ENCODE measurements at regions of chr20 and their contacts with region 1.

Region 1: DNA sequence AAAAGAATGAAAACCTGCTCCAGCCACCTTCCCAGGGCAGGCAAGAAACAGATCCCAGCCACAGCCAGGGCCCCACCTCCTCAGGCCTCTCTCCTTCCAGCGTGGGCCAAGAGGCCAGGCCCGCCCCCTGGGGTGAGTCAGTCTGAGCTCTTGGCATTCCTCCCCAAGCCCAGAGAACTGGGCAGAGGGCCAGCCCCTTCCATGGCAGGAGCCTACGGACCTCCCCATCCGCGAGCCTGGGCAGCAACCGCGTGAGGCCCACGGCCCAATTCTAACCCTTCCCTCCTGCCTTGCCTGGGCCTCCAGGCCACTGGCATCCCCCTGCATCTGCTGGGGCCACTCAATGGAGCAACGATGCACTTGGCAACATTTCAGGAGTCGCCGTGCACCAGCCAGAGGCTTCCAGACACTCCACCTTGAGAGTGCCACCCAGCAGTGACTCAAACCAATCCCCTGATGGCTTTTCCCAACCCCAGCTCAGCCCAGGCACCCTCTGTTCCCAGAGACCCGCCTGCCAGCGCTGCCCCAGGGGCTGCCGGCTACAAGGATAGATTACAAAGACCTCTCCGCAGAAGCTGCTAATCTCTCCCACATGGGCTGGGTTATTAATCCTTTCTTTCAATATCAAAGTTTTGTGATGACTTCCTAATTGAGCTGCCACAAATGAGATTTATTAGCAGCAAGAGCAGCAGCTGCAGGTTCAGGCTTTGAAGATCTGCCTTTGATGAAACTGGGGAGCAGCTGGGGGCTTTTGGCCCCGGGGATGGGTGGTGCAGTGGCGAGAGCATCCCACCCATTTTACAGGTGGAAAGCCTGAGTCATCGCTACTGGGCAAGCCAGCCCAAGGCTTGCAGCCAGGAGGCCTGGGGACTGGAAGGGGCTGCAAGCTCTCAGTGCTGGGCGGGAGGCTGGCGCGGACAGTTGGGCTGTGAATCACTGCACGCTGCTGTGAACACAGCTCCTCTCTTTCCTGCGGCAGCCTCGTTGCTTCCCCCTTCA is 85.7 kb downstream of the NFATC2 start:
- DNase-seq: peak; percentile 34
- ATAC-seq: peak; percentile 31
- H3K4me3 ChIP-seq: peak overlapping the region in 1 of 5 experiments; percentile 36
- H3K4me3 Mint-ChIP-seq: peak overlapping the region; percentile 64
- H3K27ac ChIP-seq: peak overlapping the region in 1 of 2 donors; percentile 12
- H3K27ac Mint-ChIP-seq: peak overlapping the region; percentile 56
- H3K4me1 ChIP-seq: peaks cover 43 to 51% of the 10 kb centered on the region in 2 donors
- H3K4me1 Mint-ChIP-seq: peaks cover 45% of the 10 kb centered on the region
- H3K27me3 ChIP-seq: no peaks in the 10 kb centered on the region
- H3K27me3 Mint-ChIP-seq: no peaks in the 10 kb centered on the region
- CTCF ChIP-seq: no peak

Region 2: GRCh38 chr20:51404298-51405060 is 52.3 kb before region 1 on chr20:
- CTCF ChIA-PET with region 1: interaction called, 11 read pairs
- POLR2A ChIA-PET with region 1: no interaction called
- intact Hi-C with region 1: loop called (anchors 1 kb)
- DNase-seq: peak; percentile 92
- ATAC-seq: peak; percentile 85
- H3K4me3 ChIP-seq: no peak overlapping the region
- H3K4me3 Mint-ChIP-seq: peak overlapping the region; percentile 49
- H3K27ac ChIP-seq: peak overlapping the region; percentile 86 to 97
- H3K27ac Mint-ChIP-seq: peak overlapping the region; percentile 99
- H3K4me1 ChIP-seq: peaks cover 62 to 74% of the 10 kb centered on the region in 2 donors
- H3K4me1 Mint-ChIP-seq: peaks cover 77% of the 10 kb centered on the region
- H3K27me3 ChIP-seq: no peaks in the 10 kb centered on the region
- H3K27me3 Mint-ChIP-seq: no peaks in the 10 kb centered on the region
- CTCF ChIP-seq: no peak

Region 3: GRCh38 chr20:51412333-51412871 is 44.4 kb before region 1 on chr20:
- CTCF ChIA-PET with region 1: no interaction called
- POLR2A ChIA-PET with region 1: no interaction called
- intact Hi-C with region 1: loop called (anchors 1 kb)
- DNase-seq: no peak
- ATAC-seq: no peak
- H3K4me3 ChIP-seq: no peak overlapping the region
- H3K4me3 Mint-ChIP-seq: no peak overlapping the region
- H3K27ac ChIP-seq: no peak overlapping the region
- H3K27ac Mint-ChIP-seq: peak overlapping the region; percentile 59
- H3K4me1 ChIP-seq: peaks cover 46 to 61% of the 10 kb centered on the region in 2 donors
- H3K4me1 Mint-ChIP-seq: peaks cover 65% of the 10 kb centered on the region
- H3K27me3 ChIP-seq: no peaks in the 10 kb centered on the region
- H3K27me3 Mint-ChIP-seq: no peaks in the 10 kb centered on the region
- CTCF ChIP-seq: no peak

Region 4: DNA sequence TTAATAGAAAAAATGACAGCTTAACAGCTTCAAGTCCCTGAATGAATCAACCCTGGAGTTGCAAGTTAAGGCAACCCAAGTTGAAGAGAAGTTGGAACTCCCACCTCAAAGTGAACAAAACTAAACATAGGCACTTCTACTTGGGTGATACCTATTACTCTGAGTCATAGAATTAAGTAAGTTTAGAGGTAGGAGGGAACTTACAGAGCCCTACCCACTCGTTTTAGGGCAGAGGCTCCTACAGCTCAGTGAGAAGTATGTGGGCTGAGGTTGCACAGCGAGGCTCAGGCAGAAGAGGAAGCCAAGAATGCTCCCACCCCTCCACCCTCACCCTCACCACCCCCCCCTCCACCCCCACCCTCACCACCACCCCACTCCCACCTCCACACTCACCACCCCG is 43.5 kb after region 1 on chr20:
- CTCF ChIA-PET with region 1: interaction called, 3 read pairs
- POLR2A ChIA-PET with region 1: interaction called, 3 read pairs
- intact Hi-C with region 1: loop called (anchors 2 kb)
- DNase-seq: peak; percentile 63
- ATAC-seq: peak; percentile 76
- H3K4me3 ChIP-seq: no peak overlapping the region
- H3K4me3 Mint-ChIP-seq: no peak overlapping the region
- H3K27ac ChIP-seq: peak overlapping the region; percentile 11 to 25
- H3K27ac Mint-ChIP-seq: peak overlapping the region; percentile 29
- H3K4me1 ChIP-seq: peaks cover 71 to 89% of the 10 kb centered on the region in 2 donors
- H3K4me1 Mint-ChIP-seq: peaks cover 89% of the 10 kb centered on the region
- H3K27me3 ChIP-seq: no peaks in the 10 kb centered on the region
- H3K27me3 Mint-ChIP-seq: no peaks in the 10 kb centered on the region
- CTCF ChIP-seq: no peak

Region 5: DNA sequence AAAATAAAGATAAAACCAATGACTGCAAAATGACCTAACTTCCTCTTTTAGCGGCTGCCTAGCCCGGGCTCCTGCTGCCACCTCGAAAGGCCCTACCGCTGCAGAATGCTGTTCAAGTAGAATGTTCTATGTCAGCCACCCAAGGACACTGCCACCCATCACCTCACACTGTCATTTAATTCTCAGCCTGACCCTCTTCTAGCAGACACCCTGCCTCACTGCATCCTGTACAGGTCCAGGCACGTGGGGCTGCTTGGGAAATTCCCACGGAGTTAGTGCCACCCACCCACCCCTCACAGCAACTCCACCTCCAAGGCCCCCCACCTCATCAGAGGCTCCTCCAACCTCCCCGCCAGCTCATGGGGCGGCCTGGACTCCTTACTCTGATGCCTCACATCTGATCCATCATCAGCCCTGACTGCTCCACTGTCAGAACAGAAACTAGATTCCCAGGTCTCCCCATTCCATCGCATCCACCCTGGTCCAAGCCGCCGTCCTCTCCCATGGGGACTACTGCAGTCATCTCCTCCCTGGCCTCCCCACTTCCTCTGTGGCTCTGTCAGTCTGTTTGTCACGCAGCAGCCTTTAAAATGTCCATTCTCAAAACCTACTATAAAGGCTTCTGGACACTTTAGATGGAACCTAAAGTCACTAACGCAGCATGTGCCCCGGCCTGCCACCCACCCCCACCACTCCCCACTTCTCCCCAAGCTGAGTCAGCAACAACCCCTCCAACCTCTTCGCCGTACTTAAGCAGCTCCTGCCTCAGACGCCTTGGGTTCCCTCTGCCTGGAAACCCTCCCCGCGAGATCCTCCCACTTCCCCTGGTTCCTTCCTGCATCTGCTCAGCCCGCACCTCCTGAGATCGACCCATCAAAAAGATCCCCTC is 68.7 kb after region 1 on chr20:
- CTCF ChIA-PET with region 1: no interaction called
- POLR2A ChIA-PET with region 1: no interaction called
- intact Hi-C with region 1: loop called (anchors 5 kb)
- DNase-seq: peak; percentile 69
- ATAC-seq: peak; percentile 66
- H3K4me3 ChIP-seq: peak overlapping the region in 2 of 5 experiments; percentile 2 to 48
- H3K4me3 Mint-ChIP-seq: peak overlapping the region; percentile 80
- H3K27ac ChIP-seq: peak overlapping the region; percentile 70 to 78
- H3K27ac Mint-ChIP-seq: peak overlapping the region; percentile 89
- H3K4me1 ChIP-seq: peaks cover 47 to 60% of the 10 kb centered on the region in 2 donors
- H3K4me1 Mint-ChIP-seq: peaks cover 70% of the 10 kb centered on the region
- H3K27me3 ChIP-seq: no peaks in the 10 kb centered on the region
- H3K27me3 Mint-ChIP-seq: no peaks in the 10 kb centered on the region
- CTCF ChIP-seq: no peak

Region 6: GRCh38 chr20:51541189-51542032 is 84.6 kb after region 1 on chr20:
- CTCF ChIA-PET with region 1: interaction called, 9 read pairs
- POLR2A ChIA-PET with region 1: interaction called, 12 read pairs
- intact Hi-C with region 1: loop called (anchors 1 kb)
- DNase-seq: peak; percentile 86
- ATAC-seq: peak; percentile 50
- H3K4me3 ChIP-seq: peak overlapping the region; percentile 61 to 89 (median 74)
- H3K4me3 Mint-ChIP-seq: peak overlapping the region; percentile 97
- H3K27ac ChIP-seq: peak overlapping the region; percentile 88 to 96
- H3K27ac Mint-ChIP-seq: peak overlapping the region; percentile 96
- H3K4me1 ChIP-seq: peaks cover 30 to 50% of the 10 kb centered on the region in 2 donors
- H3K4me1 Mint-ChIP-seq: peaks cover 54% of the 10 kb centered on the region
- H3K27me3 ChIP-seq: peaks cover 0 to 4% (median 0%) of the 10 kb centered on the region in 4 experiments
- H3K27me3 Mint-ChIP-seq: no peaks in the 10 kb centered on the region
- CTCF ChIP-seq: no peak

Region 7: DNA sequence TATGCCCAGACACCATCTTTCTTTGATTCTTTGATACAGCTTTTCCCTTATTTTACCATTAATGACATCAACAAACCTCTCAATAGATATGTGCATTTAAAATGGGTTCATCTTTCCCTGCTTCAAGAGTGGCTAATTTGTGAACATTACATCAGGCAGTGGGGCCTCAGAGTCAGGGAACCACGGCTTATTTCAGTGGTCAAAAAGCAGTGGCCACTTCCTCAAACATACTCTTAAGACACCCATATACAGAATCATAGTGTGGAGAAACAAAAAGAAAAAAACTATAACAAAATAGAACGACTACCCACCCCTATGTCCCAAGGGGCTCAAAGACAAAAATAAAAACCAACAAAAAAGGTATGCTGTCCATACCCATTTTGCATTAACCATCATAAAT is 332.6 kb after region 1 on chr20:
- CTCF ChIA-PET with region 1: no interaction called
- POLR2A ChIA-PET with region 1: no interaction called
- intact Hi-C with region 1: no loop called
- DNase-seq: no peak
- ATAC-seq: no peak
- H3K4me3 ChIP-seq: no peak overlapping the region
- H3K4me3 Mint-ChIP-seq: no peak overlapping the region
- H3K27ac ChIP-seq: no peak overlapping the region
- H3K27ac Mint-ChIP-seq: no peak overlapping the region
- H3K4me1 ChIP-seq: no peaks in the 10 kb centered on the region
- H3K4me1 Mint-ChIP-seq: no peaks in the 10 kb centered on the region
- H3K27me3 ChIP-seq: no peaks in the 10 kb centered on the region
- H3K27me3 Mint-ChIP-seq: peaks cover 8% of the 10 kb centered on the region
- CTCF ChIP-seq: no peak

Measured in B cell (primary cell).